Sciatic nerve (tissue), 2 donors: ENCODE measurements at regions of chr22 and their contacts with region 1.

Region 1: GRCh38 chr22:43848366-43849171 is 13.7 kb downstream of the SULT4A1 start:
- DNase-seq: peak; percentile 46
- ATAC-seq: no peak

Region 2: DNA sequence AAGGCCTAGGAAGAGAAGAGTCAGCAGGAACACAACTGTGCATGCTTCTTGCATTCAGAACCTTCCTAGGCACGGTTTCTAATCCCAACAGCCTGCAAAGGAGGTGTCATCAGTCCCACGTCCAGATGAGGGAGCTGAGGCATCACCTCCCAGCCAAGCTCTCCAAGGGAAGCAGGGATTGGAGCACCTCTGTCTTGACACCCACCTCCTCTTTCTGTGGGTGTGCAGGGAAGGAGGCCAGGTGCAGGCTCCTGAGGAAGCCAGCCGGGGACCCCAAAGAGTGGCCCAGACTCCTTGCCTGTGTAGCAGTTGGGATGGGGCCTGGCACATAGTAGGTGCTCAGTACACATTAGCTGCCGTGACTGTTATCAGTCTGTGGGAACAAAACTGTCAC is 41.3 kb after region 1 on chr22:
- intact Hi-C with region 1: loop called (anchors 5 kb)
- DNase-seq: peak; percentile 14
- ATAC-seq: no peak